AG04449 (cell line): ENCODE measurements at regions of chr16 and their contacts with region 1.

Region 1: GRCh38 chr16:80974649-80975376 is 31.9 kb downstream of the CMC2 start:
- DNase-seq: no peak
- H3K4me3 ChIP-seq: no peak overlapping the region
- CTCF ChIP-seq: peak; percentile 15

Region 2: DNA sequence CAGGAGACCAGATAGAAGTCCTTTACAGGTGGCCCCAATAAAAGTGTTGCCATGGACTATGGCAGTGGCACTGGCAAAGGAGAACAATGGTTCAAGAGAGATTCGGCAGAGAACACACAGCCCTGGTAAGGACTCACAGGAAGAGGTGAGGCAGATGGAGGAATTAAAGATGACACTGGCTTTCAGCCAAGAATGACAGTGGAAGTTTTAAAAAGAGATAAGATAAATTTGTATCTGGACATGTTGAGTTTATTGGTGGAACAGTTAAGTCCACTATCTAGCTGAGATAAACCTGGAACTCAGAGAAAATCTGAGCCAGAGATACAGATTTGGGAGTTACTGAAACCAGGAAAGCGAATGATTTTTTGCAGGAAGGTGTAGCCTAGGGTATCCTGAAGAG is 11.7 kb after region 1 on chr16:
- CTCF ChIA-PET with region 1: interaction called, 14 read pairs
- POLR2A ChIA-PET with region 1: no interaction called
- DNase-seq: no peak
- H3K4me3 ChIP-seq: no peak overlapping the region
- CTCF ChIP-seq: no peak

Region 3: DNA sequence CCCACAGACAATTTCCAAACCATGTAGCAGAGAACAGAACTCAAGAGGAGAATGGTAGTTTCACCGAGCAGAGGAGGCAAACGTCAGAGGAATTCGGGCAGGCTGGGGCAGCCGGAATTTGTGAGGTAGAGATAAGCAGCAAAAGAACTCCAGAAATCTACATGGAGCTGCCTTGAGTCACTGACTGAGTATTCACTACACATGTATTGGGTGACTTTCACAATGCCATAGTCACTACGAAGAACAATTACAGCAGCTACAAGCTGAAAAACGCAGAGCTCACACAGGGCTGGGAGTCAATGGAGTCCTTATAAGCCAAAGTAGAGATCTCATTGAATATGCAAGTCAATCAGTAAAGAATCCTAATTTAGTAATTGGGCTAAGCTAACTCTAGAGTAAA is 18.5 kb after region 1 on chr16:
- CTCF ChIA-PET with region 1: interaction called, 14 read pairs
- POLR2A ChIA-PET with region 1: no interaction called
- DNase-seq: peak; percentile 87
- H3K4me3 ChIP-seq: peak overlapping the region; percentile 43
- CTCF ChIP-seq: no peak